Right ventricle myocardium inferior (tissue), 1 donor: ENCODE measurements at regions of chr10 and their contacts with region 1.

Region 1: DNA sequence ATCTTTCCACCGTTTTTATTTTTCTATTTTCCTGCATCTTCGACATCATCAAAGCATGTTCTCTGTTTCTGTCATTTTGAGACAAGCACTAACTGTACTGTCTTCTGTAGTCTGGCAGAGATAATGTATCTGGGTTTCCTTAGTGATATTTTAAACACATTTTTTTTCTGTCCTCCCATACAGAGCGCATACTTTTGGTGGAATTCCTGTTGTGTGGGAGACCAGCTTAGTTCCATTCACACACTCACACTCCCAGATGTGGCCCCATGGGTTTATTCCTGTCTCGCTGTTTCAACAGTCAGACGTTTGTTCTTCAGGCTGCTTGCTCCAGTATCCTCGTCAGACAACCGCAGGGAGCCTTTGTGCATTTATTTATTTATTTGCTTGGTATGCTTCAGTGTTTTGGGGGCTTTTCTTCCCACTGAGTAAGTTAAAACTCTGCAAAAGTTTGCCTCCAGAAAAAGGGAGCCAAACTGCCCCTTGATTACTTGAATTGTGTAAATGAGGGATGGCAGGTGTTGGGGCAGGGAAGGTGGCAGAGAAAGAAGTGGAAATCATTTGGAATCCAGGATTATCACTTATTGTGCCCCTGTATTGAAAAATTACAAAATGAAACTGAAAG is 456.8 kb upstream of the KLF6 start:
- DNase-seq: no peak
- ATAC-seq: peak; percentile 89

Region 2: DNA sequence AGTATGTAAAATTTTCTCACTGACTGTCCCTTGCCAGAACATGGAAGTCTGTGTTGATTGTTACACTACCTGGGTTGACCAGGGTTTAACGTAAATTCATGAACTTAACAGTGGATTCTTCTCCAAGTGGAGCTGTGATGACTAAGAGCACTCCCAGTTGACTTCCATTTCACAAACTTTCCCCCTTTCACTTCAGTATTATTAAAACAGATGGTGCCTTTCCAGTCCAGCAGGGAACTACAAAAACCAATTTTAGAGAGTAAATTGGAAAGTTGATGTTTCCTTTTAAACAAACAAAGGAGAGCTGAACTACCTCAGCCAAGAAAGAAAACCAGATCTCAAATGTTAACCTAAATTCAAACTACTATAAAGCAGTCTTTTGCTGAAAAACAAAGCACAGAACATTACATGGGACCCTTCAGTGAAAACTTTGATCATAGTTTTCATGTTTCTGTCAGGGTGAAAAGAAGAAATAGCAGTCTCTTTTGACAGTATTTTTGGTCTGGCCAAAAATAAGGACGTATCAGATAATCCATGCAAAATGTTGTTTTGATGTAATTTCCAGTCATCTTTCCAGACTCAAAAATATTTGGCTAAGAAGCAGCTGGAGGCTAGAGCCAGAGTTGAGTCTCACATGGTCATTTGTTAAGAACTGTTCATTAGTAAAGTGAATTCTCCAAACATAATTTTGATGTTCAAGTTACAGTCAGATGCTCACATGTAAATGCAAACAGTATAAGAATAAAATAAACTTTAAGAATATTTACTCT is 104.2 kb after region 1 on chr10:
- intact Hi-C with region 1: loop called (anchors 5 kb)
- DNase-seq: no peak
- ATAC-seq: peak; percentile 62

Region 3: GRCh38 chr10:4649886-4650508 is 408.2 kb after region 1 on chr10:
- intact Hi-C with region 1: loop called (anchors 10 kb)
- DNase-seq: no peak
- ATAC-seq: peak; percentile 57